ENCODE measurements at regions of chr5 and their contacts with region 1.

Region 1: GRCh38 chr5:65021527-65022226 is 252.9 kb downstream of the CWC27 start:
- DNase-seq: no peak
- ATAC-seq: no peak
- H3K4me3 ChIP-seq: no peak overlapping the region
- H3K27ac ChIP-seq: no peak overlapping the region
- H3K4me1 ChIP-seq: no peaks in the 10 kb centered on the region
- H3K27me3 ChIP-seq: peaks cover 0 to 1% of the 10 kb centered on the region in 2 donors

Region 2: GRCh38 chr5:64971513-64971912 is 50.2 kb before region 1 on chr5:
- intact Hi-C with region 1: loop called in 1 of 2 experiments (anchors 10 kb)
- DNase-seq: no peak
- ATAC-seq: no peak
- H3K4me3 ChIP-seq: no peak overlapping the region
- H3K27ac ChIP-seq: no peak overlapping the region
- H3K4me1 ChIP-seq: no peaks in the 10 kb centered on the region
- H3K27me3 ChIP-seq: no peaks in the 10 kb centered on the region

Region 3: DNA sequence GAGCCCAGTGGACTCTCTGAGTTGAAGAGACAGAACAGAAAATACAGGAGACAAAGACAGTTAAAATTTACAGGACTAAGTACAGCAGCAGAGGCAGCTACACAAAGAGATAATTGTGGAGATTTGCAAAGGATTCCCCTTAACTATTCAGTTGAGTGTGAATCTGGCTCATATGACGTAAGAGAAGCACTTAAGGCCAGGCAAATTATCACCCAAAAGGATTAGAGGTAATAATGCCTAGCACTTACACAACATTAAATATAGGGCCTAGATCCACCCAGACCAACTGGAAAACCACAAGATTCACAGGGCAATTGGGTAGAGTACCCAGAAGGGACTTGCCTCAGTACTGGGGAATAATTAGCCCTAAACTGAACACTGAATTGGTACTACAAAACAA is 418.8 kb after region 1 on chr5:
- intact Hi-C with region 1: no loop called
- DNase-seq: no peak
- ATAC-seq: no peak
- H3K4me3 ChIP-seq: no peak overlapping the region
- H3K27ac ChIP-seq: no peak overlapping the region
- H3K4me1 ChIP-seq: no peaks in the 10 kb centered on the region
- H3K27me3 ChIP-seq: no peaks in the 10 kb centered on the region